ENCODE measurements at regions of chr17 and their contacts with region 1.

Region 1: DNA sequence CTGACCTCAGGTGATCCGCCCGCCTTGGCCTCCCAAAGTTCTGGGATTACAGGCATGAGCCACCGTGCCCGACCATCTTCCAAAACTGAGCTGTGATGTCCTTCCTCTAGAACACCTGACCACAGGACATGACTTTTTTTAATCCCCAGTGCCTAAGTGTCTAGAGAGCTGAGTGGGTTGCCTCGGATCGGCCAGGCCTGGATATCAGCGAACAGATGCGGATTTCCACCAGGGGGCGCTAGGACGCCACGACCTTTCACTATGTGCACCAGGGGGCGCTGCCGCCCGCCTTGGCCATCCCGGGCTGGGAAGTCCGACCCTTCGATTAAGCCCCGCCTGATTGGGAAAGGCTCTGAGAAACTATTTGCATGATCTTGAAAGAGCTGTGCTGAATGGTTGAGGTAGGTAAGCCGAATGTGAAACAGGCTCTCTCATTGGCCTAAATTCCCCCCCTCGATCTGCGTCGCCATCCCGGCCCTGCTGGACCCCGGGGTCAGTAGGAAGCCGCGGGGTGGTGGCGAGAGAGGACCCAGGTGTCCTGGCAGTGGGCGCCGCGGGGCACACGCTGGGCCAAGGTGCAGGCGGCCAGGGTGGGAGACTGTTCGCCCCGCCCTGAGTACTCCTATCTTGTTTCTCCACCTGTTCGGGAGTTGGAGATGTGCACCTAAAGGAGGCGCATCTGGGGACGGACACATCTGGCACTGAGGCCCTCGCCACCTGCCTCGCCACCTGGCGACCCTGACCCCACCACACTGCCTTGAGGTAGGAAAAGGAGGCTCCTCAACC is at the start of gene ACBD4:
- DNase-seq: peak; percentile 97 to 98
- H3K4me3 ChIP-seq: peak within 1 kb of the TSS; percentile 56
- H3K4me3 Mint-ChIP-seq: peak within 1 kb of the TSS; percentile 81
- H3K27ac Mint-ChIP-seq: peak within 1 kb of the TSS; percentile 56
- H3K4me1 ChIP-seq: peaks cover 17% of the 10 kb centered on the region
- H3K4me1 Mint-ChIP-seq: peaks cover 11% of the 10 kb centered on the region
- H3K27me3 ChIP-seq: no peaks in the 10 kb centered on the region
- H3K27me3 Mint-ChIP-seq: no peaks in the 10 kb centered on the region
- CTCF ChIP-seq: peak; percentile 100
- total RNA-seq, gene ACBD4: 21.2 and 21.6 TPM in 2 replicates

Region 2: DNA sequence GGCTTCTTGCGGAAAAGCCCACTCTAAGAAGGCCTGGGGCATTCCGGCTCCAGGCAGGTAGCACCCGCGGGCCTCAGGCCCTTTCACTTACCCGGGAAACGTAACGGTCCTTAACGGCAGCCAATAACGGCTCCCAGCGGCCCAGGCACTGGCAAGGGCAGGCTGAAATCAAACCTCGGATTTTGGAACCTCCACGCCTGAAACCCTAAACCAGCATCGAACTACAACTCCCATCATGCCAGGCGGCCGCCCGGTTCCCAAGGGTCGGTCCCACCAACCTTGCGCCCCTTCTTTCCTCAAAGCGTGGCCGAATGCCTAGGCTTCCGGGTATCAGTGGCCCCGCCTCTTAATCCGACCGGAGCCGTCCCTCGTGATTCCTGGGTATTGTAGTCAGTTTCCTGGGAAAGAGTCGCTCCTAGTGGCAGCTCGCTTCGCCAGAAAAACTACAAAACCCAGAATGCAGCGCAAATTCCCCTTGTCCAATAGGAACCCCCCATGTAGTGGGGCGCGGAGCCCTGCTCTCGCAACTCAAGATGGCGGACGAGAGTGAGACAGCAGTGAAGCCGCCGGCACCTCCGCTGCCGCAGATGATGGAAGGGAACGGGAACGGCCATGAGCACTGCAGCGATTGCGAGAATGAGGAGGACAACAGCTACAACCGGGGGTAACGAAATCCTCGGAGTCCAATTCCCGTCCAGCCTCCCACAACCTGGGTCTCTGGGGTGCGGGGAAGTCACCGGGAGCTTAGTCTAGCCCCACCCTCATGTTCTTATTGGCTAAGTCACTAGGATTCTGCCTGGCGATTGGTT is 74.4 kb before region 1 on chr17 and contains the start of gene NMT1:
- CTCF ChIA-PET with region 1: interaction called, 15 read pairs
- POLR2A ChIA-PET with region 1: no interaction called
- intact Hi-C with region 1: no loop called
- DNase-seq: peak; percentile 98 to 99
- H3K4me3 ChIP-seq: peak within 1 kb of the TSS; percentile 92
- H3K4me3 Mint-ChIP-seq: peak within 1 kb of the TSS; percentile 97
- H3K27ac Mint-ChIP-seq: peak within 1 kb of the TSS; percentile 100
- H3K4me1 ChIP-seq: peaks cover 16% of the 10 kb centered on the region
- H3K4me1 Mint-ChIP-seq: peaks cover 17% of the 10 kb centered on the region
- H3K27me3 ChIP-seq: no peaks in the 10 kb centered on the region
- H3K27me3 Mint-ChIP-seq: no peaks in the 10 kb centered on the region
- CTCF ChIP-seq: no peak
- total RNA-seq, gene NMT1: 173 and 179 TPM in 2 replicates

Region 3: DNA sequence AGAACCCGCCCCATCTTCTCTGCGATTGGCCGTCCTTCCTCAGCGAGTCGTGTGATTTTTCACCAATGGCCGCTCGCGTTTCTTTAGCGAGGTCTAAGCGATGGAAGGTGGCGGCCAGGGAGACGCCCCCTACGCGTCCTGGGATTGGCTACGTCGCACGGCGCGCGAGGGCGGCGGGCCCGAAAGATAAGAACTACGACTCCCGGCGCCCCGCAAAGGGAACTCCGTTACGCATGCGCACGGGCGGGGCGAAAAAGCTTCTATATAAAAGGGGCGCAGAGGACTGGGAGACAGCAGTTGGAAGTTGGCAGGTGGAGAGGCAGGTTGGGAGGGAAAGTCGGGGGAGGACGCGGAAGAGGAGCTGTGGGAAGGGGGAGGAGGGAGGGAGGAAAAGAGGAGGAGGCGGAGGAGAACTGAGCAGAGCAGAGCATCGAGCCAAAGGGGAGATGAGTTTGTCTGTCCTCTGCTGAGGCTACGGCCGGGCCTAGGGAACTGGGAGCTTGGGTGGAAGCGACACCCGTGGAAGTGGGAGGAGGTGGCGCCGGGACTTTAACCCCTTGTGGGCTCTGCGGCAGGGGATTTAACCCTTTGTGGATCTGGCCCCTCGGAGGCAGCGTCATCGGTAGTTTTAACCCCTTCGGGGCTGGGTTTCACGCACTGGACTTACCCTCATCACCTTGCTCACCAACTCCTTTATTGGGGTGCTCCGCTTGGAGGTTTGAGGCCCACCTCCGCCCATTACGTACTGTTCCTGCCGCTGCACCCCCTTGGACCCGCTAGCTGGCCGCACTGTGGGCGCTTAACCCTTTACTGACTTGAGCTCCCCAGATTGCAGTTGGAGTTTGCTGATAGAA is 13.0 kb after region 1 on chr17 and contains the start of gene HEXIM1:
- CTCF ChIA-PET with region 1: interaction called, 230 read pairs
- POLR2A ChIA-PET with region 1: interaction called, 52 read pairs
- intact Hi-C with region 1: loop called (anchors 1 kb)
- DNase-seq: peak; percentile 99
- H3K4me3 ChIP-seq: peak within 1 kb of the TSS; percentile 70
- H3K4me3 Mint-ChIP-seq: peak within 1 kb of the TSS; percentile 99
- H3K27ac Mint-ChIP-seq: peak within 1 kb of the TSS; percentile 94
- H3K4me1 ChIP-seq: peaks cover 17% of the 10 kb centered on the region
- H3K4me1 Mint-ChIP-seq: peaks cover 15% of the 10 kb centered on the region
- H3K27me3 ChIP-seq: no peaks in the 10 kb centered on the region
- H3K27me3 Mint-ChIP-seq: peaks cover 4% of the 10 kb centered on the region
- CTCF ChIP-seq: no peak
- total RNA-seq, gene HEXIM1: 71.0 and 78.0 TPM in 2 replicates

Region 4: DNA sequence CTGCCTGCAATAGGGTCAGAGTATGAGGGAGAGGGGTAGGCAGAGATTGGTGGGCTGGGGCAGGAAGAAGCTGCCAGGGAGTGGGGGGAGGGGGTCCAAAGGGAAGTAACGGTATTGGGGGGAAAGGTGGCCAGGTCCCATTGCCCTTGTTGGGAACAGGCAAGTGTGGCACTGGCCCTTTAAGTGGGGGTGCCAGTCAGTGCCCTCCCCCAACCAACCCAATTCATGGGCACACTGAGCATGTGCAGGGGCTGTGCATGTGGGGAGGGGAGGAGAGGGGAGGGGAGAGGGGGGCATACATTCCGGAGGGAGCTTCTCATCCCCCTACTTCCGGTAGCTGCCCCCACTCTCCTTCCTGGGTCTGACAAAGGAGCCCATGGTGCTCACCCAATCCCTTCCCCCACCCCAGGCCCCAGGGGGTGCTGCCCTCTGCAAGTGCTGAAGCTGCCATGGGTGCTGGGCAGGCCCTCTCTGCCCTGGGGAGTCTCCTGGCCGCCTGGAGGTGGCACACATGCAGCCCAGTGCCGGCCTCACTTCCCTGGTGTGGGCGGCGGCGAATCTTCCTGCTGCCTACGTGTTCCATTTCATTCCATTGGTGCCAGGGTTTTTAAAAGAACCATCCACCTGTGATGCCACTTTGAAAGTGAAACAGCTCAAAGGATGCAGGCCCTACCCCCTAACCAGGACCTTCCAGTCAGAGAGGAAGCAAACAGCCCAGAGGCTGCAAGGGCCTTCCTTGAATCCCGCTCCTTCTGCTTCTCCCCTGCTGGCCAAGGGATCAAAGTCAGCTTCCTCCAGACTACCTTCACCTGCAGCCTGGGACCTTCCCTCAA is 37.3 kb after region 1 on chr17:
- CTCF ChIA-PET with region 1: interaction called, 53 read pairs
- POLR2A ChIA-PET with region 1: interaction called, 11 read pairs
- intact Hi-C with region 1: no loop called
- DNase-seq: peak; percentile 42 to 67
- H3K4me3 ChIP-seq: peak overlapping the region; percentile 2; the same call in 1 of the 2 replicates
- H3K4me3 Mint-ChIP-seq: peak overlapping the region; percentile 64
- H3K27ac Mint-ChIP-seq: peak overlapping the region; percentile 94
- H3K4me1 ChIP-seq: peaks cover 70% of the 10 kb centered on the region
- H3K4me1 Mint-ChIP-seq: peaks cover 45% of the 10 kb centered on the region
- H3K27me3 ChIP-seq: no peaks in the 10 kb centered on the region
- H3K27me3 Mint-ChIP-seq: no peaks in the 10 kb centered on the region
- CTCF ChIP-seq: peak in 1 of 2 experiments; percentile 0

Region 5: GRCh38 chr17:45218895-45219661 is 83.7 kb after region 1 on chr17:
- CTCF ChIA-PET with region 1: interaction called, 12 read pairs
- POLR2A ChIA-PET with region 1: no interaction called
- intact Hi-C with region 1: no loop called
- DNase-seq: peak; percentile 86 to 92
- H3K4me3 ChIP-seq: no peak overlapping the region
- H3K4me3 Mint-ChIP-seq: no peak overlapping the region
- H3K27ac Mint-ChIP-seq: no peak overlapping the region
- H3K4me1 ChIP-seq: peaks cover 5% of the 10 kb centered on the region; the same call in 1 of the 2 replicates
- H3K4me1 Mint-ChIP-seq: no peaks in the 10 kb centered on the region
- H3K27me3 ChIP-seq: peaks cover 1% of the 10 kb centered on the region; the same call in 1 of the 2 replicates
- H3K27me3 Mint-ChIP-seq: peaks cover 17% of the 10 kb centered on the region
- CTCF ChIP-seq: peak; percentile 88 to 97

Region 6: DNA sequence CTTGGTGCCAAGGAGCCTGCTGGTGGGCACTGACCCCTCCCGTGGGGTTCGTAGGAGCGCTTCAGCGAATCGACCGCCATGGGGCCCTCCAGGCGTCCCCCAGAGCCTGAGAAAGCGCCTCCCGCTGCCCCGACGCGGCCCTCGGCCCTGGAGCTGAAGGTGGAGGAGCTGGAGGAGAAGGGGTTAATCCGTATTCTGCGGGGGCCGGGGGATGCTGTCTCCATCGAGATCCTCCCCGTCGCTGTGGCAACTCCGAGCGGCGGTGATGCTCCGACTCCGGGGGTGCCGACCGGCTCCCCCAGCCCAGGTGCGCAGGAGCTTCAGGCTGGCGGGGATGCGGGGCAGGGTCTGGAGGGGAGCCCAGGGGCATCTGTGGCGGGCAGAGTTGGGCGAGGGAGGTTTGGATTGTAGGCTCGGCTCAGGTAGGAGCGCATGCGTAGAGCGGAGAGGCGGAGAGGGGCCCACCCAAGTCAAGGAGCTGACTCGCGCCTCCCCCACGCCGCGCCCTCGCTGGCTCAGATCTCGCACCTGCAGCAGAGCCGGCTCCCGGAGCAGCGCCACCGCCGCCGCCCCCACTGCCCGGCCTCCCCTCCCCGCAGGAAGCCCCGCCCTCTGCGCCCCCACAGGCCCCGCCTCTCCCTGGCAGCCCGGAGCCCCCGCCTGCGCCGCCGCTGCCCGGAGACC is 106.1 kb after region 1 on chr17:
- CTCF ChIA-PET with region 1: interaction called, 25 read pairs
- POLR2A ChIA-PET with region 1: no interaction called
- intact Hi-C with region 1: no loop called
- DNase-seq: peak in 1 of 2 experiments; percentile 56
- H3K4me3 ChIP-seq: peak overlapping the region; percentile 25
- H3K4me3 Mint-ChIP-seq: peak overlapping the region; percentile 63
- H3K27ac Mint-ChIP-seq: no peak overlapping the region
- H3K4me1 ChIP-seq: peaks cover 7% of the 10 kb centered on the region
- H3K4me1 Mint-ChIP-seq: peaks cover 3% of the 10 kb centered on the region
- H3K27me3 ChIP-seq: no peaks in the 10 kb centered on the region
- H3K27me3 Mint-ChIP-seq: peaks cover 3% of the 10 kb centered on the region
- CTCF ChIP-seq: no peak

Measured in Caco-2 (cell line).